CD8-positive, alpha-beta T cell (primary cell): ENCODE measurements at regions of chr5 and their contacts with region 1.

Region 1: DNA sequence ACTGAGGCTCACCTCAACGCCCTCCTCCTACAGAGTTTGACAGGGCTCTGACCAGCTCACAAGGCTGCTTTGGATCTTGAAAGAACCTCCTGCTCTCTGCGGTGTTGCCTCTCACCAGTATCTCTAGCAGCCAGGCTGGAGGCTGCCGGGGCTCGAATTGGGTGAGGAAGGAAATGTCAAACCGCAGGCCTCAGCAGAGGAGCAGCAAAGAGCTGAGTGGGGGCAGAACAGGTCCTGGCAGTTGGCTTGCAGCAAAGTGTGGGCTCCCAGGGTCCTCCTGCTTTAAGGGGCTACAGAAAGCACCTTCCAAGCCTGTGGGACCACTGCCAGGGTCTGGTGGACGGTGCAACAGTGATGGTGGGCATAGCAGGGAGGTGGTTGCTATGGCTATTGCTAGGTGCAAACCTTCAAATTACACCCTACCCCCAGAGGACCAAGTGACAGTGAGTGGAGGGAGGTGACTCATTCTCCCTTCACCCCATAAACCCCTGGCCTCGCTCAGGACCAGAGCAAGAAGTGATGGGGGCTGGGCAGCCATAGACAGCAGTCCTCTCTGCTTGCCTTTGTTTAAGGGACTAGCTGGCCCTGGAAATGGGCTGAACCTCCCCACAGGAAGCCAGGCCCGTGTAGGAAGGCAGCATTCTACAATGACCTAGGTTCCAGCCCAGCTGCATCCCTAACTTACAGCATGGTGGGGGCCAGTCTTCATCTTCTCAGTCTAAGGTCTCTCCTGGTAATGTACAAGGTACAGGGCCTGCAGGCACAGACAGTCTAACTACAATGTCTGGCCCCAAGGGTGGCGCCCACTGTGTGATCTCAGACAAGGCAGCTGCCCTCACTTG is 18.7 kb downstream of the LCP2 start:
- DNase-seq: peak; percentile 76 to 97 (median 88)
- ATAC-seq: peak; percentile 67
- H3K4me3 ChIP-seq: peak overlapping the region; percentile 28 to 40
- H3K4me3 Mint-ChIP-seq: peak overlapping the region; percentile 78
- H3K27ac ChIP-seq: peak overlapping the region; percentile 36 to 76
- H3K27ac Mint-ChIP-seq: peak overlapping the region; percentile 97
- H3K4me1 ChIP-seq: peaks cover 95% of the 10 kb centered on the region
- H3K4me1 Mint-ChIP-seq: peaks cover 97% of the 10 kb centered on the region
- H3K27me3 ChIP-seq: no peaks in the 10 kb centered on the region
- H3K27me3 Mint-ChIP-seq: no peaks in the 10 kb centered on the region
- CTCF ChIP-seq: no peak

Region 2: DNA sequence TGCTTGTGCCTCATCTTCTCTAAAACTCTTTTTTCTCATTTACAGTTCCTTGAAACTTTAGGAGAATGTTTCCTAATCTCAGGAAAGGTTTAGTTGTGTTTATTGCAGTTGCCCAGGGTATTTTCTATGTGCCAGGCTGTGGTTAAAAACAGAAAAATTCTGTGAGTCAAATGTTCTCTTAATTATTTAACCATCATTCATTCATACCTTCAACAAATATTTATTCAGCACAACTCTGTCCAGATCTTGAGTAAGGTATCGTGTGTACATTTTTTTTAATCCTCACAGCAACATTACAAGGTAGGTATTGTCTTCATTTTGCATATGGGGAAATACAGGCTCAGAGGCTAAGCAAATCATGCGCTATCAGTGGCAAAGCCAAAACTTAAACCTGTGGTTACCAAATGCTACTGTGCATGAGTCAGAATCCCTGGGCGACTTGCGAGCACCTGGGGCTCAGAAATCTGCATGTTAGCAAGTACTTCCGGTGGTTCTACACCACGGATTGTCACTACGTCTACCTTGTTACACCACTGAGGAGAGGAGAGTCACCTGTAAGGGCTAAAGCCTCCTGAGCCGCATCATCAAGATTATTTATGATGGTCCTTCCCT is 24.9 kb before region 1 on chr5:
- CTCF ChIA-PET with region 1: interaction called, 19 read pairs
- POLR2A ChIA-PET with region 1: interaction called, 4 read pairs
- intact Hi-C with region 1: loop called in 1 of 2 experiments (anchors 2 kb)
- DNase-seq: peak; percentile 44 to 92 (median 73)
- ATAC-seq: peak; percentile 95
- H3K4me3 ChIP-seq: no peak overlapping the region
- H3K4me3 Mint-ChIP-seq: peak overlapping the region; percentile 16
- H3K27ac ChIP-seq: peak overlapping the region; percentile 38 to 61
- H3K27ac Mint-ChIP-seq: peak overlapping the region; percentile 95
- H3K4me1 ChIP-seq: peaks cover 39% of the 10 kb centered on the region
- H3K4me1 Mint-ChIP-seq: peaks cover 77% of the 10 kb centered on the region
- H3K27me3 ChIP-seq: no peaks in the 10 kb centered on the region
- H3K27me3 Mint-ChIP-seq: no peaks in the 10 kb centered on the region
- CTCF ChIP-seq: no peak

Region 3: GRCh38 chr5:170267431-170268152 is 11.2 kb before region 1 on chr5:
- CTCF ChIA-PET with region 1: interaction called, 70 read pairs
- POLR2A ChIA-PET with region 1: interaction called, 75 read pairs
- intact Hi-C with region 1: loop called (anchors 1 to 2 kb)
- DNase-seq: peak; percentile 65 to 93 (median 86)
- ATAC-seq: peak; percentile 52
- H3K4me3 ChIP-seq: peak overlapping the region in 1 of 2 experiments; percentile 9
- H3K4me3 Mint-ChIP-seq: peak overlapping the region; percentile 69
- H3K27ac ChIP-seq: peak overlapping the region; percentile 8 to 77
- H3K27ac Mint-ChIP-seq: peak overlapping the region; percentile 98
- H3K4me1 ChIP-seq: peaks cover 90% of the 10 kb centered on the region
- H3K4me1 Mint-ChIP-seq: peaks cover 96% of the 10 kb centered on the region
- H3K27me3 ChIP-seq: no peaks in the 10 kb centered on the region
- H3K27me3 Mint-ChIP-seq: no peaks in the 10 kb centered on the region
- CTCF ChIP-seq: peak; percentile 87

Region 4: DNA sequence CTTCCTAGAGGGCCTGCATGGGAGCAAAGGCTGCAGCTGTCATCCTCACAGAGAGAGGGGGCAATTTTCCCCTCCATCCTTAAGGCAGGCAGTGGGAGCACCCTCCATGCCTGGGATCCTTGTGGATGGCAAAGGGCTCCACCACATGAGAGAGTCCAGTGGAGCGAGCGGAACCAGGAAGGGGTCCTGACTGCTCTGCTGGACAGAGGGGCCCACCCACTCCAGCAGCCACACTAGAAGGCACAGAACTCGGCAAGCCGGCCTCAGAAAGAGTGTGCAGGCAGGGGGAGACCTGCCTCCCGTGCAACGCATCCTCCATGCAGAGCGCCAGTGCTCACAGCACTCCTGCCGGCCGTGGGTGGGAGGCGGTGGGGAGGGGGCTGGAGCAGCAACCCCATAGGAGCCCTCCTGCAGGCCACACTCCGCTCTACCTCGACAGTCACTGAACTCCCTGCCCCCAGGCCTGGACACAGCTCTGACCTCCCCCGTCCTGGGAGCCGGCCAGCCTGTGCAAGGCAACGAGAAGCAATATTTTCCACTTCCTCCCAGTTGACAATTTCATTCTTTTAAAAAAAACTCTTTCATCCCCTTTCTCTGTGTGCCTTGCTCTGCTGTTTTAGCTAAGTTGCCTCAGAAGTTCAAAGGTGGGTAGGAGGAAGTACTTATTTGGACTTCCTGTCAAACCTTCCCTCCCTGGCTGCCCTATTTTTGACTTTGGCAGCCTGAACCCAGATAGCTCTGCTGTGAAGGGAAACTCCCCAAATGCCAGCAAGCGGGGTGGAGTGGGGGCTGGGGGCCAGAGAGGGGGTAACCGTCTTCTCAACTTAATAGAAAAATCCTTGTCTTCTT is 24.0 kb after region 1 on chr5:
- CTCF ChIA-PET with region 1: interaction called, 385 read pairs
- POLR2A ChIA-PET with region 1: interaction called, 494 read pairs
- intact Hi-C with region 1: loop called in 1 of 2 experiments (anchors 1 kb)
- DNase-seq: peak; percentile 28 to 96 (median 68)
- ATAC-seq: peak; percentile 90
- H3K4me3 ChIP-seq: peak overlapping the region; percentile 42 to 60
- H3K4me3 Mint-ChIP-seq: peak overlapping the region; percentile 86
- H3K27ac ChIP-seq: peak overlapping the region; percentile 46 to 69
- H3K27ac Mint-ChIP-seq: peak overlapping the region; percentile 96
- H3K4me1 ChIP-seq: peaks cover 65% of the 10 kb centered on the region
- H3K4me1 Mint-ChIP-seq: peaks cover 84% of the 10 kb centered on the region
- H3K27me3 ChIP-seq: no peaks in the 10 kb centered on the region
- H3K27me3 Mint-ChIP-seq: no peaks in the 10 kb centered on the region
- CTCF ChIP-seq: peak; percentile 27

Region 5: GRCh38 chr5:170327168-170327567 is 48.3 kb after region 1 on chr5:
- CTCF ChIA-PET with region 1: interaction called, 95 read pairs
- POLR2A ChIA-PET with region 1: interaction called, 25 read pairs
- intact Hi-C with region 1: loop called in 1 of 2 experiments (anchors 1 kb)
- DNase-seq: peak in 1 of 9 experiments; percentile 35
- ATAC-seq: no peak
- H3K4me3 ChIP-seq: no peak overlapping the region
- H3K4me3 Mint-ChIP-seq: no peak overlapping the region
- H3K27ac ChIP-seq: peak overlapping the region in 1 of 2 experiments; percentile 36
- H3K27ac Mint-ChIP-seq: no peak overlapping the region
- H3K4me1 ChIP-seq: peaks cover 52% of the 10 kb centered on the region
- H3K4me1 Mint-ChIP-seq: peaks cover 12% of the 10 kb centered on the region
- H3K27me3 ChIP-seq: no peaks in the 10 kb centered on the region
- H3K27me3 Mint-ChIP-seq: no peaks in the 10 kb centered on the region
- CTCF ChIP-seq: no peak

Region 6: DNA sequence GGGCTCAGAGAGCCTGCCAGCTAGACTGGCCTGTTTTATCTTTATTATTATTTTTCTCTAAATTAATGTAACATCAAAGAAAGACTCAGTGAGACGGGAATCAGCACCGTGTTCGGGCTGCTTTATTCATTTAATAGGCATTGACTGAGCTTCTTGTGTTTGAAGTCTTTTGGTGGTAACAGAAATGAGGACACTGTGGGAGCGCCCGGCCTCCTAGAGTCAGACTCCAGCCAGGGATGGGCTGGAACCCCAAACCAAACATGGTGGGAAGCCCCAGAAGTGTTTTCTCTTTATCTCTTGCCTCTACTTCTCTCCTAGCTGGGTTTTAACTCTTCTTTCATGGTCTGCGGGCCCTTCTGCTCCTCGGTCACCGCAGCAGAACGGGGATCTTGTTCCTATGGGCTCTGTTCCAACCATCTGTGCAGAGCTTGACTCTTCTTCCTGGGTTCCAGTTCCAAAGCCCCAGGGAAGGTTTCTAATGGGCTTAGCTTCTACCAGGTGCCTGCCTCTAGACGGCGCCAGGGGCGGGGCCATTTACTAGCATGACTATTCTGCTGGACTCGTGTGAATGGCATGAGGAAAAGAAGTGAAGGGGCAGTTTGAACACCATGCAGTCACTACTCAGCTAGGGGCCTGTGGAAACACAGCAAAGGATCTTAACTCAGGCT is 1264.5 kb after region 1 on chr5:
- CTCF ChIA-PET with region 1: no interaction called
- POLR2A ChIA-PET with region 1: no interaction called
- intact Hi-C with region 1: no loop called
- DNase-seq: no peak
- ATAC-seq: no peak
- H3K4me3 ChIP-seq: no peak overlapping the region
- H3K4me3 Mint-ChIP-seq: no peak overlapping the region
- H3K27ac ChIP-seq: no peak overlapping the region
- H3K27ac Mint-ChIP-seq: no peak overlapping the region
- H3K4me1 ChIP-seq: no peaks in the 10 kb centered on the region
- H3K4me1 Mint-ChIP-seq: no peaks in the 10 kb centered on the region
- H3K27me3 ChIP-seq: no peaks in the 10 kb centered on the region
- H3K27me3 Mint-ChIP-seq: peaks cover 21% of the 10 kb centered on the region
- CTCF ChIP-seq: no peak